Activated CD4-positive, alpha-beta T cell treated with anti-CD3 and anti-CD28 coated beads for 36 hours (primary cell): ENCODE measurements at regions of chr3 and their contacts with region 1.

Region 1: DNA sequence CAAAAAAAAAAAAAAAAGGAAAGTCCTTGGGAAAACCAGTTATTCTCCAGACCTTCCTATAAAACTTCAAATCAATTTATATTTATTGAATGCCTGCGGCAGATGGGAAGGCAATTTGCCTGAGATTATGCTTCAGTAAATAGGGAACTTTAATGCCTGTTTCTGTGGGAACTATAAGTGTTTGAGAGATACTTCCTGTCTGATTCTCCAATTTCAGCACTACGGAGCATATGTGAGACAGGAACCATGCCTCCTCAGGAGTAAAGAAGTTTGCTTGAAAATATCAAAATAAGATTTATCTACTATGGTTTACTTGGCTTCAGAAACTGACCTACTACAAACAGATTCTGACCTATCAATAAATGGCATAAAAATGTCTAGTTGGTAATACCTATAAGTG is 135.5 kb downstream of the CBLB start:
- DNase-seq: no peak
- ATAC-seq: no peak
- H3K4me3 Mint-ChIP-seq: no peak overlapping the region
- H3K27ac Mint-ChIP-seq: no peak overlapping the region
- H3K4me1 Mint-ChIP-seq: peaks cover 5% of the 10 kb centered on the region
- H3K27me3 Mint-ChIP-seq: no peaks in the 10 kb centered on the region

Region 2: GRCh38 chr3:105722943-105723556 is 10.3 kb before region 1 on chr3:
- CTCF ChIA-PET with region 1: interaction called, 3 read pairs
- POLR2A ChIA-PET with region 1: no interaction called
- intact Hi-C with region 1: loop called in 1 of 2 experiments (anchors 1 kb)
- DNase-seq: no peak
- ATAC-seq: peak; percentile 60
- H3K4me3 Mint-ChIP-seq: no peak overlapping the region
- H3K27ac Mint-ChIP-seq: no peak overlapping the region
- H3K4me1 Mint-ChIP-seq: peaks cover 21% of the 10 kb centered on the region
- H3K27me3 Mint-ChIP-seq: no peaks in the 10 kb centered on the region

Region 3: GRCh38 chr3:107227091-107227490 is 1493.7 kb after region 1 on chr3:
- CTCF ChIA-PET with region 1: no interaction called
- POLR2A ChIA-PET with region 1: no interaction called
- intact Hi-C with region 1: no loop called
- DNase-seq: no peak
- ATAC-seq: no peak
- H3K4me3 Mint-ChIP-seq: no peak overlapping the region
- H3K27ac Mint-ChIP-seq: no peak overlapping the region
- H3K4me1 Mint-ChIP-seq: no peaks in the 10 kb centered on the region
- H3K27me3 Mint-ChIP-seq: peaks cover 8% of the 10 kb centered on the region